ENCODE measurements at regions of chr12 and their contacts with region 1.

Region 1: DNA sequence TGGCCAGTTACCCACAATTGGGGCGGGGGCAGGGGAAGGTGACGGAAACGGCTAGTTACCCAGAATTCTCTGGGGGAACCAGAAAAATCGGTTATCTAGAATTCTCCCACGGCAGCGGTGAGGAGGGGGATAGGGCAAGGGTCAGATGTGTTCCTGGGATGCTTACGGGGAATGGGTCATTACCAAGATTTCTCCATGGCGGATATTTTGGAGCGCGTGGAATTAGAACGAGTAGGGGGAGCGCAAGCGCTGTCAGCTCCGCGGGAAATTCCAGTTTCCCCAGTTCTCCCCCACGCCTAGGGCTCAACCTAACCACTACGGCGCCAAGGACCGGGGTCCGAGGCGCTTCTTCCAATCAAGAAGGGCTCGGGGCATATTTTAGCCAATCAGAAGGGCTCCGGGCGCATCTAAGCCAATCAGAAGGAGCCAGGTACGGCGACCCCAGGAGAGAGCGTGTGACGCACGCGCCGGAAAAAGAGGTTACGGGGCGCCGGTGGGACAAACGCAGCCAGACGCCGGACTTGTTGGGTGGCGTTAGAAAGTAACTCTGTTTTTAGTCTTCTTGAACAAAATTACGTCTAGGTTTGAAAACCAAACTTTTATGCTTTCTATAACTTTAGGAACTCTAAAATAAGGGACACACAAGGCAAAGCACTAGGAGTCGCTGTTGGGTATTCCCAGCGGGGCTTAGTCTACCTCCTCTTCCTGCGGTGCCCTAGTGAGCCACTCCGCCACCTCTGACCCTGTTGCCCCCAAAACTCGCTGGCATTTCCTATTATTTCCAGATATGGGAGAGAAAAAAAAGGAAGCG is at the start of gene PAN2:
- DNase-seq: peak; percentile 74 to 94 (median 92)
- ATAC-seq: peak; percentile 90
- H3K4me3 ChIP-seq: peak within 1 kb of the TSS; percentile 93
- H3K4me3 Mint-ChIP-seq: peak within 1 kb of the TSS; percentile 89 to 99 (median 95)
- H3K27ac ChIP-seq: peak within 1 kb of the TSS; percentile 98
- H3K27ac Mint-ChIP-seq: peak within 1 kb of the TSS; percentile 97 to 100 (median 99)
- H3K4me1 ChIP-seq: peaks cover 27 to 30% of the 10 kb centered on the region in 2 donors
- H3K4me1 Mint-ChIP-seq: peaks cover 16 to 66% (median 48%) of the 10 kb centered on the region in 7 donors
- H3K27me3 ChIP-seq: no peaks in the 10 kb centered on the region
- H3K27me3 Mint-ChIP-seq: peaks cover 0 to 2% (median 0%) of the 10 kb centered on the region in 5 donors
- total RNA-seq, gene PAN2: 65.8 to 279 (median 144) TPM

Region 2: DNA sequence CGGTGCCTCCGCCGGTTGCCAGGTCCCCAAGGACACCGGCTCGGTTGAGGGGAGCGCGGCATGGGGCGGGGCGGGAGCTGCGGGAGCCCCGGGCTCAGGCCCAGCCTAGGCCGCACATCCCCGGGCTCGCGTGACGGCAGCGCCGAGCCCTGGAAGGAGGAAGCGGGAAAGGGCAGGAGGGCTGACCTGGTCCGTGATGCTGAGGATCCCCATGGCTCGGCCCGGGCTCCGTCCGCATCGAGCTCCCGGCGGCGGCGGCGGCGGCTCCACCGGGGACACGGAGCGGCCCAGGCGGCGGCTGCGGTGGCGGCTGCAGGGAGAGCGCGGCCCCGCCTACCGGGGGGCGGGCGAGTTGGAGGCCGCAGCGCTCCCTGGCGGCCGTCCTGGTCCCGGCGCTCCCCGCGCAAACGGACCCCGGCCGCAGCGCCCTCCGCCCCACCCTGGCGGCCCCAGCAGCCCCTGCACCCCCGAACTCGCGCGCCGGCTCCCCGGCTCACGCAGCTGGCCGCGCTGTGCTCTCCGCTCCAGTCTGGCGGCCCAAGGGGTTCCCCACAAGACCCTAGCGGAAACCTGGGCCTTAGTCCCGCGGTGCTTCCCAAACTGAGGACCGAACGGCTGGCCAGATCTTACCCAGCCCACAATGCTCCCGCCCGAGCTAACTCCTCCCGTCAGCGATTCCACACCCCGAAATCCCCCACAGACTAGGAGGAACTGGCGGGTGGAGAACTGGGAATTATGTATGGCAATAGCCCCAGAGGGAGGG is 75.6 kb before region 1 on chr12 and contains the start of gene ANKRD52:
- CTCF ChIA-PET with region 1: no interaction called
- POLR2A ChIA-PET with region 1: no interaction called
- intact Hi-C with region 1: loop called in 1 of 2 experiments (anchors 2 kb)
- DNase-seq: peak; percentile 69 to 92 (median 84)
- ATAC-seq: peak; percentile 99
- H3K4me3 ChIP-seq: peak within 1 kb of the TSS; percentile 99
- H3K4me3 Mint-ChIP-seq: peak within 1 kb of the TSS; percentile 87 to 97 (median 93)
- H3K27ac ChIP-seq: peak within 1 kb of the TSS; percentile 90
- H3K27ac Mint-ChIP-seq: peak within 1 kb of the TSS; percentile 83 to 94 (median 90)
- H3K4me1 ChIP-seq: peaks cover 18 to 19% of the 10 kb centered on the region in 2 donors
- H3K4me1 Mint-ChIP-seq: peaks cover 13 to 27% (median 22%) of the 10 kb centered on the region in 7 donors
- H3K27me3 ChIP-seq: no peaks in the 10 kb centered on the region
- H3K27me3 Mint-ChIP-seq: peaks cover 0 to 2% (median 0%) of the 10 kb centered on the region in 5 donors
- total RNA-seq, gene ANKRD52: 26.9 to 64.4 (median 40.7) TPM

Region 3: GRCh38 chr12:56308714-56309113 is 25.2 kb before region 1 on chr12:
- CTCF ChIA-PET with region 1: no interaction called
- POLR2A ChIA-PET with region 1: interaction called, 66 read pairs
- intact Hi-C with region 1: no loop called
- DNase-seq: no peak
- ATAC-seq: no peak
- H3K4me3 ChIP-seq: no peak overlapping the region
- H3K4me3 Mint-ChIP-seq: no peak overlapping the region
- H3K27ac ChIP-seq: no peak overlapping the region
- H3K27ac Mint-ChIP-seq: no peak overlapping the region
- H3K4me1 ChIP-seq: no peaks in the 10 kb centered on the region
- H3K4me1 Mint-ChIP-seq: no peaks in the 10 kb centered on the region
- H3K27me3 ChIP-seq: no peaks in the 10 kb centered on the region
- H3K27me3 Mint-ChIP-seq: no peaks in the 10 kb centered on the region

Region 4: DNA sequence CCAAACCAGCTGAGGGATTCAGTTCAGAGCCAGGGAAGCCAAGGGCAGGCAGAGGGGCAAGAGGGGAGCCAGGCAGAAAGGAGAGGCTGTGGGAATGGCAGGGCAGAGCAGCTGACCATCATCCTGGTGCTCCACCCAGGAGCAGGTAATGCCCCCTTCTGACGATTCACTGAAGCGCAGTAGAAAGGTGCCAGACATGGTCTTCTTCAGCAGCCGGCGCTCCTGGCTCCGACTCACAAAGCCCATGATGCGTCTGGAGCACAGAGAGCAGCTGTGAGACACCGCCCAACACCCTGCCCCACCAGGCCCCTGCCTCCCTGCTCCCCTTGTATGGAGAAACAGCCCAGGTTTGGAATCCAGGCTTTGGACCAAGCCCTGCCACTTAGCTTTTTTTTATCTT is 12.8 kb after region 1 on chr12:
- CTCF ChIA-PET with region 1: interaction called, 4 read pairs
- POLR2A ChIA-PET with region 1: interaction called, 18 read pairs
- intact Hi-C with region 1: loop called in 1 of 2 experiments (anchors 1 kb)
- DNase-seq: no peak
- ATAC-seq: peak; percentile 22
- H3K4me3 ChIP-seq: no peak overlapping the region
- H3K4me3 Mint-ChIP-seq: no peak overlapping the region
- H3K27ac ChIP-seq: no peak overlapping the region
- H3K27ac Mint-ChIP-seq: peak overlapping the region in 6 of 9 donors; percentile 13 to 75 (median 59)
- H3K4me1 ChIP-seq: no peaks in the 10 kb centered on the region
- H3K4me1 Mint-ChIP-seq: peaks cover 0 to 6% (median 2%) of the 10 kb centered on the region in 7 donors
- H3K27me3 ChIP-seq: no peaks in the 10 kb centered on the region
- H3K27me3 Mint-ChIP-seq: no peaks in the 10 kb centered on the region

Region 5: GRCh38 chr12:56437430-56438176 is 103.7 kb after region 1 on chr12:
- CTCF ChIA-PET with region 1: interaction called, 10 read pairs
- POLR2A ChIA-PET with region 1: no interaction called
- intact Hi-C with region 1: no loop called
- DNase-seq: no peak
- ATAC-seq: no peak
- H3K4me3 ChIP-seq: no peak overlapping the region
- H3K4me3 Mint-ChIP-seq: no peak overlapping the region
- H3K27ac ChIP-seq: no peak overlapping the region
- H3K27ac Mint-ChIP-seq: peak overlapping the region in 2 of 9 donors; percentile 65 to 77
- H3K4me1 ChIP-seq: no peaks in the 10 kb centered on the region
- H3K4me1 Mint-ChIP-seq: peaks cover 0 to 9% (median 0%) of the 10 kb centered on the region in 7 donors
- H3K27me3 ChIP-seq: no peaks in the 10 kb centered on the region
- H3K27me3 Mint-ChIP-seq: no peaks in the 10 kb centered on the region

Region 6: GRCh38 chr12:56468216-56469006 is 134.5 kb after region 1 on chr12 and contains the start of gene SPRYD4:
- CTCF ChIA-PET with region 1: interaction called, 10 read pairs
- POLR2A ChIA-PET with region 1: interaction called, 6 read pairs
- intact Hi-C with region 1: loop called (anchors 1 kb)
- DNase-seq: peak; percentile 89 to 97 (median 96)
- ATAC-seq: peak; percentile 99
- H3K4me3 ChIP-seq: peak within 1 kb of the TSS; percentile 99
- H3K4me3 Mint-ChIP-seq: peak within 1 kb of the TSS; percentile 90 to 99 (median 97)
- H3K27ac ChIP-seq: peak within 1 kb of the TSS; percentile 87
- H3K27ac Mint-ChIP-seq: peak within 1 kb of the TSS; percentile 92 to 99 (median 98)
- H3K4me1 ChIP-seq: peaks cover 12 to 20% of the 10 kb centered on the region in 2 donors
- H3K4me1 Mint-ChIP-seq: peaks cover 6 to 51% (median 26%) of the 10 kb centered on the region in 7 donors
- H3K27me3 ChIP-seq: no peaks in the 10 kb centered on the region
- H3K27me3 Mint-ChIP-seq: no peaks in the 10 kb centered on the region
- total RNA-seq, gene SPRYD4: 5.2 to 7.5 (median 7.2) TPM

Measured in naive thymus-derived CD4-positive, alpha-beta T cell (primary cell).